ENCODE measurements at regions of chr19 and their contacts with region 1.

Region 1: DNA sequence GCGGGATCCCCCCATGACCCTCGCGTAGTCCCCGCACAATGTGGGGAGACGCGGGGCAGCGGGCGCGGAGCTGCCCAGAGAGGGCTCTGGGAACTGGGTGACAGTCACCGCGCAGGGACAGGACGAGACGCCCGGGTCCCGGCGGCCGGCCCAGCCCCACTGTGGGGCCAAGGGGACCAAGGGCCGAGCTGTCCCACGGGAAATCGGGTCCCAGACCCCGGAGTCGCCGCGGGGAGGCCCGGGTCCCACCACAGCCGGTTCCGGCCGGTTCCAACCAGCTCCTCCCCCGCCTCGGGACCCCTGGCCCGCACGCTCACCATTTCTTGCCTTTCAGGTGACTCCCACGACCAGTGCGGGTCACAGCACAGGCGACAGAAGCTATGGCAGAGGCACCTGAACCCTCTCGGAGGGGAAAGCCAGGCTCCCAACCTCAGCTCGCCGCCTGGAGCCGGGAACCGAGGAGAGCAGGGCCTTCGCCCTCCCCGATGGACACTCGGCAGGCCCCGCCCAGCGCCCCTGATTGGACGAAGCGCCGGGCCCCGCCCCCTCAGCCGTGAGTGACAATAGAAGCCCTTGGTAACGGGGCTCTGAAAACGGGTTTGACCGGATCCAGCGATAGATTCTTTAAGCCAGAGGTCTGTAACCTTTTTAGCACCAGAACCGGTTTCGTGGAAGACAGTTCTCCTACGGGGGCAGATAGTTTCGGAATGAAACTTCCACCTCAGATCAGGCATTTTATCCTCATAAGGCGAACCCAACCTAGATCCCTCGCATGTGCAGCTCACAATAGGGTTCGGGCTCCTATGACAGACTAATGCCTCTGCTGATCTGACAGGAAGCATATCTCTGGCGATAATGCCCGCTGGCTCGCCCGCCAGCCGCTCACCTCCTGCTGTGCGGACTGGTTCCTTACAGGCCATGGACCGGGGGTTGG is at the start of gene ZNF433:
- DNase-seq: peak; percentile 80
- ATAC-seq: peak; percentile 98
- H3K4me3 Mint-ChIP-seq: peak within 1 kb of the TSS; percentile 92
- H3K27ac Mint-ChIP-seq: peak within 1 kb of the TSS; percentile 74
- H3K4me1 Mint-ChIP-seq: peaks cover 20% of the 10 kb centered on the region
- H3K27me3 Mint-ChIP-seq: no peaks in the 10 kb centered on the region
- CTCF ChIP-seq: no peak
- total RNA-seq, gene ZNF433: 6.9 and 8.6 TPM in 2 replicates

Region 2: DNA sequence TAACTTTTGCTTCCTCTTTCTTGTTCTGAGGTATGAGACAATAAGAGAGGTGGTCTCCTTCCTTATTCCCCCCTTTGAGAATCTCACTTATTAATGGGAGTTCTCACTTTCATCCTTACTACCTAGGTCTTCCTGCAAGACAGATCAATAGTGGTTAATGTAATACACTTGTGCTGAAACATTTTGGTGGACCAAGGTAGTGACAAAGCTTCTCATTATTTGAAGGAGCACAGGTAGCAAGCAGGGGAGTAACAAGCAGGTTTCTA is 92.7 kb before region 1 on chr19:
- CTCF ChIA-PET with region 1: no interaction called
- POLR2A ChIA-PET with region 1: interaction called, 10 read pairs
- intact Hi-C with region 1: no loop called
- DNase-seq: no peak
- ATAC-seq: no peak
- H3K4me3 Mint-ChIP-seq: no peak overlapping the region
- H3K27ac Mint-ChIP-seq: no peak overlapping the region
- H3K4me1 Mint-ChIP-seq: peaks cover 6% of the 10 kb centered on the region
- H3K27me3 Mint-ChIP-seq: no peaks in the 10 kb centered on the region
- CTCF ChIP-seq: no peak

Region 3: DNA sequence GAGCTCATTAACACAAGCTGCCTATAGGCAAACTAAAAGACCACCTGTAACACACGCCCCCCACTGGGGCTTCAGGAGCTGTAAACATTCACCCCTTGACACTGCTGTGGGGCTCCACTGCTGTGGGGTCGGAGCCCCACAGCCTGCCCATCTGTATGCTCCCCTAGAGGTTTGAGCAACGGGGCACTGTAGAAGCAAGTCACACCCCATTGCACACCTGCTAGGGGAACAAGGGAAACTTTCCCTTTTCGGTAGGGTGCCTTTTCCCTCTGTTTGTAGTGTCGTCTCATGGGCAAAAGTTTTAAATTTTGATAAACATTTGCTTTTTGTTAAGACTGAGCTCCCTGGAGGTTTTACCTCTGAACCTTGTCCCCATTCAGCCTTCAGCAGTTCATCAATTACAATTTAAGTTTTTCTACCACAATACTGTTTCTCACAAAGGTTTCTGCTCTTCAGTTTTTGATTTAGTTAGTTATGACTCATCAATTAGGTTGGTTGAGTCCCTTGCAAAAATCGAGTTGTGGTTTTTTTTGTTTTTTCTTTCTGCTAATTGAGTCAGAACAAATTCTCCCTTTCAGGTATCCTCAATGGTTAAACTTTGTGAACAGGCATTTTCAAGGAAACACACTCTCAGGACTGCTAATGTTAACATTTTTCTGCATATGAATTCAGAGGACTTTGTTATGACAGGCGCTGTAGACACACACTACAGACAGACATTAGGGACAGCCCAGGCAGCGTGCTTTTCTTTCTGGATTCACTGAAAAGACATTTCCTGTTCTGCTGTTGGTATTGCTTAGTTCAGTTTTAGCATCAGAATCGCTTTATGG is 35.1 kb before region 1 on chr19:
- CTCF ChIA-PET with region 1: no interaction called
- POLR2A ChIA-PET with region 1: no interaction called
- intact Hi-C with region 1: loop called (anchors 5 kb)
- DNase-seq: peak; percentile 23
- ATAC-seq: peak; percentile 84
- H3K4me3 Mint-ChIP-seq: peak overlapping the region; percentile 63
- H3K27ac Mint-ChIP-seq: peak overlapping the region; percentile 82
- H3K4me1 Mint-ChIP-seq: peaks cover 31% of the 10 kb centered on the region
- H3K27me3 Mint-ChIP-seq: no peaks in the 10 kb centered on the region
- CTCF ChIP-seq: no peak

Region 4: GRCh38 chr19:12085074-12085805 is 49.8 kb after region 1 on chr19:
- CTCF ChIA-PET with region 1: no interaction called
- POLR2A ChIA-PET with region 1: no interaction called
- intact Hi-C with region 1: no loop called
- DNase-seq: no peak
- ATAC-seq: no peak
- H3K4me3 Mint-ChIP-seq: no peak overlapping the region
- H3K27ac Mint-ChIP-seq: no peak overlapping the region
- H3K4me1 Mint-ChIP-seq: no peaks in the 10 kb centered on the region
- H3K27me3 Mint-ChIP-seq: no peaks in the 10 kb centered on the region
- CTCF ChIP-seq: no peak